ENCODE measurements at regions of chr14 and their contacts with region 1.

Region 1: GRCh38 chr14:22852940-22853767 is 16.8 kb downstream of the MMP14 start:
- DNase-seq: peak; percentile 82
- H3K4me3 ChIP-seq: peak overlapping the region; percentile 24 to 27
- H3K27ac ChIP-seq: peak overlapping the region; percentile 66 to 74
- H3K4me1 ChIP-seq: peaks cover 9% of the 10 kb centered on the region
- H3K27me3 ChIP-seq: no peaks in the 10 kb centered on the region
- CTCF ChIP-seq: peak; percentile 93 to 97 (median 96)
- POLR2A ChIP-seq: no peak

Region 2: DNA sequence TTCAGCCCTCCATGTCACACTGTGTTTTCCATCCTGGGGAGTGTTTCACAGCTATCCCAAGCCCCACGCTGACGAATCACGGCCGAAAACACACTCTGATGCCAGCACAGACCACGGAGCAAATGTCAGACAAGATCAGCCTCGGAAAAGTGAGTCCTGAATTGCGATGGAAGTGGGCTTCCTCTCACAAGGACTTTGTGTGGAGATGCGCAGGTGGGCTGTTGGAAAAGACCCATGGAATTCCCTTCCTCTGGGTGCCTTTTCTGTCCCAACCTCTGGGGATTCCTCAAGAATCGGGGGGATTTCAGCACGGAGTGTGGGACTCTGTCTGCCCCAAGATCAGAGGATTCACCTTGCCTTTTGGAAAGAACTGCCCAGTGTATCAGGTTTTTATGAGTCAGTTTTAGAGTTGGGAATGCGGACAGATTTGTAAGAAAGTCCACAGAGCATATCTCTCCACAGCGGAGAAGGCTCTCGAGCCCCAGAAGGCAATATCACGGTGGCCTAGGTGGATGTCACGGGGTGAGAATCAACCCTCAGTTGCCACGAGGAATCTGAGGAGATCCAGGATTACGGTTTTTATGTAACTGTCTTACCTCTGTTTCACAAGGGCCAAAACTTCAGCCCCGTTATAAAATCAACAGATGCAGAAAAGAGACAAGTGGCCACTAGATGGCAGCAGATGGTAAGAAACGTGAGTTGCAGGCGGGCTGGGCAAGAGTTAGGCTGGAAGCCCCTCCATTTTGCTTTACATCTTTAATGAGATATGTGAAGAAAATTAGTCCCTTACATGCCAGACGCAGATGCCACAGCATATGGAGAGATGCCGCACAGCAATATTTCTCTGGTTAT is 466.0 kb before region 1 on chr14:
- intact Hi-C with region 1: loop called (anchors 10 kb)
- DNase-seq: peak; percentile 67
- H3K4me3 ChIP-seq: no peak overlapping the region
- H3K27ac ChIP-seq: no peak overlapping the region
- H3K4me1 ChIP-seq: no peaks in the 10 kb centered on the region
- H3K27me3 ChIP-seq: no peaks in the 10 kb centered on the region
- CTCF ChIP-seq: peak; percentile 68 to 90 (median 74)
- POLR2A ChIP-seq: no peak

Region 3: DNA sequence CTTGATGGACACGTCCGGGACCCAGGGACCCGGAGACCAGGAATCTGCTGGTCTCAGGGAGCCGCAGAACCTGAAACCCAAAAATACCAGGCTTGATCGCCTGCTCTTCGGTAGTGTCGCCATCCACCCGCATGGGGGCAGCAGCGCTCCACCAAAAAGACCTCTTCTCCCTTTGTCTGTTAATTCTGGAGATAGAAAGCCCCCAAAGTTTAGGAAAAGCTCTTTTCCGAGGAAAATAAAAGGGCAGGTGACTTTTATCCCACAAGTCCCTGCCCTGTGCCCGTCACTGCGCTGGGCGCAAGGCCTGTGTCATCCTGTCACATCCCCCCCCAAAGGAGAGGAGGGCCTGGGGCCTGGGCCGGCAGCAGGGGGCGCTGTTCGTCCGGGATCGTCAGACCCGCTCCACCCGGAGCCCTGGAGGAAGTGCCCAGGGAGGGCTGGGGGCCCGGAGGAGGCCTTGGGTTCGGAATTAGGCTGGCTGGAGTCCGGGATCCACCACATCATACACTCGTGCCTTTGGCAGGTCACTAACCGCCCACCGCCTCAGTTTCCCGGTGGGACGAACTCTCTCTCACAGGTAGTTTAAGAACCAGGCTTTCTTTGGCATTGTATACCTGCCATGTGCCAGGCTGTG is 296.0 kb before region 1 on chr14:
- intact Hi-C with region 1: loop called (anchors 5 kb)
- DNase-seq: peak; percentile 65
- H3K4me3 ChIP-seq: peak overlapping the region; percentile 10 to 20
- H3K27ac ChIP-seq: peak overlapping the region; percentile 43 to 55
- H3K4me1 ChIP-seq: no peaks in the 10 kb centered on the region
- H3K27me3 ChIP-seq: no peaks in the 10 kb centered on the region
- CTCF ChIP-seq: peak; percentile 97 to 99 (median 98)
- POLR2A ChIP-seq: no peak

Region 4: DNA sequence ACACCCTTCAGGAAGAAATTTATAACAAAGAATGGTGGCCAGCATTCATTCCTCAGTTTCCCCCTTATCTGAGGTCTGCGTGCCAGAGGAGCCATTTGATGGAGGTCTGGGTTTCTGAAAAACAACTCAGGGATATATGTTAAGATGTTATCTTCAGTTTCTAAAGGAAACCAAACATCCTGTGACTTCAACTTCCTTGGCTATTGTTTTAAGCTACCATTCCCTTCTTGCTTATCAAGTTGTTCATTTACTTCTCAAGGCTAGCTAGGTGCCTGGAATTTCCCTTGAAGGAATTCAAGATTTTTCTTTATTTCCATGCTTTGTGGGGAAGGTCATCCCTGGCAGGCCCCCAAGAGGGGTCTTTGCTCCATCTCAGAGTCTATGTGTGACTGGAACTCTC is 113.7 kb before region 1 on chr14:
- intact Hi-C with region 1: no loop called
- DNase-seq: no peak
- H3K4me3 ChIP-seq: no peak overlapping the region
- H3K27ac ChIP-seq: no peak overlapping the region
- H3K4me1 ChIP-seq: no peaks in the 10 kb centered on the region
- H3K27me3 ChIP-seq: no peaks in the 10 kb centered on the region
- CTCF ChIP-seq: no peak
- POLR2A ChIP-seq: no peak

Region 5: DNA sequence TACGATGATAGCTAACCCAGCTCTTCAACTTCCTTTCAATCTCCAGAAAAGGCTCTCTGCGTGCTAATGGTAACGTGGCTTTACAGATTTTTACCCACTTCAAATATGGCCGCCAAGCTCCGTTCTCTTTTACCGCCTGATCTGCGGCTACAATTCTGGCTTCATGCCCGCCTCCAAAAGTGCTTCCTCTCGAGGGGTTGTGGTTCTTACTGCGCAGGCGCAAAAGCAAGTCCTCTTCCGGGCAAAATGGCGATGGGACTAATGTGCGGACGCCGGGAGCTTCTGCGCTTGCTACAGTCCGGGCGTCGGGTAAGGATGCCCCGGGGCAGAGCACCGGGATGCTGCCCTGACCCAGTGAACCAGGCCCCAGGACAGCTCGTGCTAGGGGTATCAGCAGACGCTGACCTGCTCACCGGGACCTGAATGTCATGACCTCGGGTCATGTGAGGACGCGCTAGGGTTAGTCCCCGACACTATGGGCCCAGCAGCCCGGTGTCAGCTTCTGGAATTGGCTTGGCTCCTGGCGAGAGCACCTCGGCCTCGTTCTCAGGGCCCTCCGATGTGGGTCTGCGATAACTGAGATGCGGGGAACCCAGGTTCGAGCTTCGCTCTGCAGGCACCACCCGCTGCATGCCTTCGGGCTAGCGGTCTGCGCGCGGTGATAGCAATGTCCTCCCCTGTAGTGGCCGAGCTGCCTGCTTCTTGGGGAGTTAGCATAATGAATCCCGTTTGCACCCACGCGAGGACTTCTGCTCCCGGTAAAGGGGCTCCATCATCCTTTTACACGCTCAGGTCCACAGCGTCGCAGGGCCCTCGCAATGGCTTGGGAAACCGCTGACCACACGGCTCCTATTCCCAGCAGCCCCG is 86.5 kb before region 1 on chr14 and contains the start of gene OXA1L:
- intact Hi-C with region 1: loop called (anchors 10 kb)
- DNase-seq: peak; percentile 97
- H3K4me3 ChIP-seq: peak within 1 kb of the TSS; percentile 67 to 91
- H3K27ac ChIP-seq: peak within 1 kb of the TSS; percentile 73 to 83
- H3K4me1 ChIP-seq: no peaks in the 10 kb centered on the region
- H3K27me3 ChIP-seq: no peaks in the 10 kb centered on the region
- CTCF ChIP-seq: no peak
- POLR2A ChIP-seq: no peak
- total RNA-seq, gene OXA1L: 65.2 to 81.9 TPM

Region 6: GRCh38 chr14:22811722-22812121 is 41.4 kb before region 1 on chr14:
- intact Hi-C with region 1: no loop called
- DNase-seq: no peak
- H3K4me3 ChIP-seq: no peak overlapping the region
- H3K27ac ChIP-seq: no peak overlapping the region
- H3K4me1 ChIP-seq: no peaks in the 10 kb centered on the region
- H3K27me3 ChIP-seq: no peaks in the 10 kb centered on the region
- CTCF ChIP-seq: no peak
- POLR2A ChIP-seq: no peak

Region 7: DNA sequence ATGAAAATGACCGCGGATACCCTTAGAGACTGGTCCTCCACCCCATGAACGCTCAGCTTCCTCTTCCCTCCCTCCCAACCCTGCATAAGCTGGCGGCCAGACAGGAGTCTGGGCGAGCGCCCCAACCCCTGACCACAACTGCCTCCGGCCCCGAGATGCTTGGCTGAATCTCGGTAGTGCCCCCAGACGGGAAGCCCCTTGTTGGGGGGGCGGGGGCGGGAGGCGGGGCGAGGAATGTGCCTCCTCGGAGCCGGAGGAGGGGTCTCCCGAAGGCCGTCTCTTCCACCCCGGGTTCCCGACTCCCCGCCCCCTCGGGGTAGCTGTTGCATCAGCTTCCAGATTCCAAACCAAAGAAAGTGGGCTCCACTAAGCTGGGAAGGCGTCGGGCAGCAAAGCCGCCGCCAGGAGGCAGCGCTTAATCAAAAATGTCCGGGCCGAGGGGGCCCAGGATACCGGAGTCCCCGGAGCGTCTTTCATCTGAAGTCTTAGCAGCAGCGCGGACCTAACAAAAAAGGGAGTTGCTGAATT is 30.5 kb before region 1 on chr14:
- intact Hi-C with region 1: loop called (anchors 2 kb)
- DNase-seq: peak; percentile 62
- H3K4me3 ChIP-seq: peak overlapping the region; percentile 21 to 23
- H3K27ac ChIP-seq: peak overlapping the region in 1 of 2 donors; percentile 56
- H3K4me1 ChIP-seq: no peaks in the 10 kb centered on the region
- H3K27me3 ChIP-seq: no peaks in the 10 kb centered on the region
- CTCF ChIP-seq: peak; percentile 65 to 87 (median 82)
- POLR2A ChIP-seq: no peak

Region 8: DNA sequence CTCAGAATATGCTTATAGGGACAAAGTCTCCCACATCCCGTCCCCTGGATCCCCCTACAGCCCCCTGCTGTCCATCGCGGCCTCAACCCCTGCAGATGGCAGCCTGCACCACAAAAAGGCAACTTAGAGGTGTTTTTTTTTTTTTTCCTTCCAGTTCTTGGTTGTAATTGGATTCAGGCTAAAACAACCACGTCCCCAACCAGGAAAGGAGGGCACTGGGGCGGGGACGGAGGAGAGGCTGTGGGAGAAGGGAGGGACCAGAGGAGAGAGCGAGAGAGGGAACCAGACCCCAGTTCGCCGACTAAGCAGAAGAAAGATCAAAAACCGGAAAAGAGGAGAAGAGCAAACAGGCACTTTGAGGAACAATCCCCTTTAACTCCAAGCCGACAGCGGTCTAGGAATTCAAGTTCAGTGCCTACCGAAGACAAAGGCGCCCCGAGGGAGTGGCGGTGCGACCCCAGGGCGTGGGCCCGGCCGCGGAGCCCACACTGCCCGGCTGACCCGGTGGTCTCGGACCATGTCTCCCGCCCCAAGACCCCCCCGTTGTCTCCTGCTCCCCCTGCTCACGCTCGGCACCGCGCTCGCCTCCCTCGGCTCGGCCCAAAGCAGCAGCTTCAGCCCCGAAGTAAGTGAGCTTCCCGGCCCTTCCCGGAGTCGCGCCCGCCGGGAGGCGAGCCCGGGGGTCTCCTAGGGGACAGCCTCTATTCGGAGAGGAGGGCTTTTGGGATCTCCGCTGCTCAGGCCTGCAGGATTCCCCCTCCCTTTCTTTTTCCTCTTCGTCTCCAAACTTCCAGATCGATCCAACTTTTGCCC is 16.6 kb before region 1 on chr14 and contains the start of gene MMP14:
- intact Hi-C with region 1: loop called (anchors 1 kb)
- DNase-seq: peak; percentile 81
- H3K4me3 ChIP-seq: peak within 1 kb of the TSS; percentile 71 to 82
- H3K27ac ChIP-seq: peak within 1 kb of the TSS; percentile 92 to 93
- H3K4me1 ChIP-seq: no peaks in the 10 kb centered on the region
- H3K27me3 ChIP-seq: no peaks in the 10 kb centered on the region
- CTCF ChIP-seq: peak in 3 of 4 experiments; percentile 33 to 58 (median 53)
- POLR2A ChIP-seq: peak; percentile 90
- total RNA-seq, gene MMP14: 64.9 to 90.4 TPM

Region 9: GRCh38 chr14:23068476-23069412 is 215.6 kb after region 1 on chr14:
- intact Hi-C with region 1: no loop called
- DNase-seq: peak; percentile 81
- H3K4me3 ChIP-seq: no peak overlapping the region
- H3K27ac ChIP-seq: peak overlapping the region in 1 of 2 donors; percentile 26
- H3K4me1 ChIP-seq: peaks cover 25% of the 10 kb centered on the region
- H3K27me3 ChIP-seq: no peaks in the 10 kb centered on the region
- CTCF ChIP-seq: peak; percentile 87 to 98 (median 97)
- POLR2A ChIP-seq: no peak

Measured in prostate gland (tissue), 2 donors.